Ovary (tissue), 10 donors: ENCODE measurements at regions of chr3 and their contacts with region 1.

Region 1: DNA sequence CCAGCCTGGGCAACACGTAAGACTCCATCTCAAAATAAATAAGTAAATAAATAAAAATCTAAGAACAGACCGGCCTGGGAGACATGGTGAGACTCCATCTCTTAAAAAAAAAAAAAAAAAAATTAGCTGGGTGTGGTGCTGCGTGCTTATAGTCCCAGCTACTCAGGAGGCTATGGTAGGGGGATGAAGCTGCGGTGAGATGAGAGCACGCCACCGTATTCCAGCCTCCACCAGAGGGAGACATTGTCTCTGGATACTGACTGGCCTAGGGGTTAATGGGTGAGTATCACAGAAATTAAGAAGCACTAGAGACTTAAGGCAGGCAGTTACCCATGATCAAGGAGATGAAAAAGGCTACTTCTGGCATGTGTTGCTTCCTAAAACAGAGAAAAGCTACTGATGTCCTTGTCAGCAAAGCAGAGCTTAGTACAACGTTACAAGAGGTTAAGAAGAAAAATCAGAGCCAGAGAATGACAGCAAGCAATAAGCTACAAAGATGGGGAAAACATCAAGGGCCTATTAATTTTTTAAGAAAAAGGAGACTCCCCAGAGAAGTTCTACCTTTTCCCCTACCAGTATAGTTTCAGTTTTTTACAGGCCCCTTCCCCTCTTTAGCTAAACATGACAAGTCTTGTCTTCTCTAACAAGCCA is 8.6 kb downstream of the TFRC start:
- DNase-seq: peak; percentile 57 to 76 (median 67)
- H3K4me3 ChIP-seq: no peak overlapping the region
- H3K27ac ChIP-seq: no peak overlapping the region
- H3K4me1 ChIP-seq: no peaks in the 10 kb centered on the region
- H3K27me3 ChIP-seq: no peaks in the 10 kb centered on the region
- CTCF ChIP-seq: peak in 2 of 3 donors; percentile 74 to 79
- EP300 ChIP-seq: no peak
- POLR2A ChIP-seq: no peak

Region 2: GRCh38 chr3:196198771-196199753 is 125.7 kb after region 1 on chr3:
- intact Hi-C with region 1: loop called (anchors 2 to 5 kb)
- DNase-seq: peak in 2 of 5 donors; percentile 52 to 60
- H3K4me3 ChIP-seq: no peak overlapping the region
- H3K27ac ChIP-seq: peak overlapping the region in 1 of 2 donors; percentile 45
- H3K4me1 ChIP-seq: peaks cover 4% of the 10 kb centered on the region
- H3K27me3 ChIP-seq: no peaks in the 10 kb centered on the region
- CTCF ChIP-seq: no peak
- EP300 ChIP-seq: no peak
- POLR2A ChIP-seq: no peak